ENCODE measurements at regions of chr14 and their contacts with region 1.

Region 1: GRCh38 chr14:75132382-75133086 is 5.7 kb upstream of the NEK9 start:
- DNase-seq: peak; percentile 74
- ATAC-seq: peak; percentile 95
- H3K4me3 ChIP-seq: no peak overlapping the region
- H3K27ac ChIP-seq: no peak overlapping the region
- H3K4me1 ChIP-seq: no peaks in the 10 kb centered on the region
- H3K27me3 ChIP-seq: no peaks in the 10 kb centered on the region
- CTCF ChIP-seq: peak; percentile 81
- POLR2A ChIP-seq: 0 out of 2 replicates have a peak, but pooled peaks have one; percentile 39
- RAD21 ChIP-seq: peak; percentile 89

Region 2: DNA sequence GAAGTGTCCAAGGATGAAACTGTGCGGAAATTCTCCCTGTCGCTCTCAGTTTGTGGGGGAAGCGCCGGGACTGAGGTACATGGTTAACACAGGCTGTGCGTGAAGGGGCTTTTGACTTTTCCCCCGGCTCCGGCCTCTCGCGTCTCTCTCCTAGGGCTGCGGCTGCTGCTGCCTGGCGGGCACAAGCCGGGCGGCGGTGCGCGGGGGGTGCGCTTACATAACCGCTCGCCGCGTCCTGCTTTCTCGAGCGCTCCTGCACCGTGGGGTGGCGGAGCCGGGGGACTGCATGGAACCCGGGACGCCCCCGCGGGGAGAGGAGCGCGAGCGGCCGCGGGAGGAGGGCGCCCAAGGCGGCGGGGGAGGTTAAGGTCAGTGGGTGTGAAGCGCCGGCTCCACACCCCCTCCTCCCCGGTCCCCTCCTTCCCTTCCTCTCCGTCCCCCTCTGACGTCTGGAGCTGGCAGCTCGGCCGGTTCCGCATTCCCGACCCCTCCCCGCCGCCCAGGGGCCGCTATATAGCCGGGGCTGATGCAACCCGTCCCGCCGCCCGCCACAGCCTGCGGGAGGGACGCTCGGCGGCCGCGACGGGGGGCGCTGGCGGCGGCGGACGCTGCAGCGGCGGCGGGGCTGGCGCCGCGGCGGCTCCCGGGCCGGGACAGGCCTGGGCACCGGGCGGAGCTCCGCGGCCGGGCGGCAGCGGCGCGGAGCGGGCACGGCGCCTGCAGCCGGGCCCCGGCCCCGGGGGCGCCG is 295.1 kb after region 1 on chr14 and contains the start of gene JDP2:
- CTCF ChIA-PET with region 1: interaction called, 4 read pairs
- POLR2A ChIA-PET with region 1: no interaction called
- dilution Hi-C with region 1: no loop called
- in situ Hi-C with region 1: no loop called
- intact Hi-C with region 1: loop called (anchors 2 kb)
- DNase-seq: peak; percentile 76
- ATAC-seq: peak; percentile 81
- H3K4me3 ChIP-seq: peak within 1 kb of the TSS; percentile 58
- H3K27ac ChIP-seq: peak within 1 kb of the TSS; percentile 83
- H3K4me1 ChIP-seq: peaks cover 21% of the 10 kb centered on the region
- H3K27me3 ChIP-seq: no peaks in the 10 kb centered on the region
- CTCF ChIP-seq: 0 out of 2 replicates have a peak, but pooled peaks have one; percentile 8
- POLR2A ChIP-seq: peak; percentile 82
- RAD21 ChIP-seq: 0 out of 2 replicates have a peak, but pooled peaks have one; percentile 12
- total RNA-seq, gene JDP2: 35.7 and 38.9 TPM in 2 replicates